ENCODE measurements at regions of chr7 and their contacts with region 1.

Region 1: GRCh38 chr7:75762314-75762917 is 9.6 kb downstream of the CCL26 start:
- DNase-seq: peak; percentile 74
- ATAC-seq: peak; percentile 96
- H3K4me3 ChIP-seq: no peak overlapping the region
- H3K27ac ChIP-seq: no peak overlapping the region
- H3K4me1 ChIP-seq: no peaks in the 10 kb centered on the region; the same call in 1 of the 2 replicates
- H3K27me3 ChIP-seq: no peaks in the 10 kb centered on the region
- CTCF ChIP-seq: peak; percentile 72

Region 2: GRCh38 chr7:75531359-75531821 is 231.0 kb before region 1 on chr7:
- CTCF ChIA-PET with region 1: no interaction called
- POLR2A ChIA-PET with region 1: no interaction called
- intact Hi-C with region 1: loop called (anchors 2 kb)
- DNase-seq: peak; percentile 32
- ATAC-seq: no peak
- H3K4me3 ChIP-seq: no peak overlapping the region
- H3K27ac ChIP-seq: no peak overlapping the region
- H3K4me1 ChIP-seq: peaks cover 10% of the 10 kb centered on the region
- H3K27me3 ChIP-seq: no peaks in the 10 kb centered on the region
- CTCF ChIP-seq: no peak

Region 3: GRCh38 chr7:75679060-75679459 is 83.4 kb before region 1 on chr7:
- CTCF ChIA-PET with region 1: interaction called, 11 read pairs
- POLR2A ChIA-PET with region 1: no interaction called
- intact Hi-C with region 1: no loop called
- DNase-seq: no peak
- ATAC-seq: no peak
- H3K4me3 ChIP-seq: no peak overlapping the region
- H3K27ac ChIP-seq: no peak overlapping the region
- H3K4me1 ChIP-seq: peaks cover 11% of the 10 kb centered on the region
- H3K27me3 ChIP-seq: no peaks in the 10 kb centered on the region
- CTCF ChIP-seq: no peak